ENCODE measurements at regions of chr13 and their contacts with region 1.

Region 1: DNA sequence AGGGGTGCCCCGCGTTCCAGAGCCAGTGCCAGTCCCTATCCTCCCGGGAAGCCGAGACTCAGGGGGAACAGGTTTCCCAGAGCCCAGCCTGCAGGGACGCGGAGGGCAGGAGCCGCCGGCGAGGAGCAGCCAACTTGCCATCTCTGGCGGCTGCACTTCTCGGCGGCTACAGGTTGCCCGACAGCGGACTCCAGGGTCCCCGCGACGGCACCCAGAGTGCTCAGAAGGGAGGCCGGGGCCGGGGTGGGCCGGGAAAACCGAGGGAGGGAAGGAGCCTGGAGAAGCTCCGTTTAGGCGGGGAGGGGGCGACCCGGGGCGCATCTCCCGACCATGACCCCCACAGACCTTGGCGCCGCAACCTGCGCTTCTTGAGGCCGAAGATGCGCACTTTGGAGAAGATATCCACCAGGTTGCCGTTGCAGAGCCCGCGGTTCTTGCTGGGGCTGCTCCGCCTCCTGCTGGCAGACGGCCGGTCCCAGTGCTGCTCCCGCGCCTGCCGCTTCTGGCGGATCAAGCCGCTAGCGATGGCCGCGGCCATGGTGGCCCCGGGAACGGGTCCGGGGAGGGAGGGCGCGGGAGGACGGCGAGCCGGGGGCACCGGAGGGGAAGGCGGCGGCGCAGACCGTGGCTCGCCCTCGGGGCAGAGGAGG is 463.8 kb downstream of the ITGBL1 start:
- DNase-seq: peak; percentile 61
- H3K4me3 ChIP-seq: peak overlapping the region; percentile 49
- H3K27ac ChIP-seq: no peak overlapping the region
- H3K4me1 ChIP-seq: peaks cover 13% of the 10 kb centered on the region
- H3K27me3 ChIP-seq: peaks cover 55% of the 10 kb centered on the region
- CTCF ChIP-seq: peak; percentile 60

Region 2: GRCh38 chr13:101785858-101786257 is 130.4 kb before region 1 on chr13:
- CTCF ChIA-PET with region 1: interaction called, 4 read pairs
- POLR2A ChIA-PET with region 1: no interaction called
- intact Hi-C with region 1: loop called (anchors 5 kb)
- DNase-seq: peak; percentile 58
- H3K4me3 ChIP-seq: no peak overlapping the region
- H3K27ac ChIP-seq: no peak overlapping the region
- H3K4me1 ChIP-seq: no peaks in the 10 kb centered on the region
- H3K27me3 ChIP-seq: no peaks in the 10 kb centered on the region
- CTCF ChIP-seq: peak; percentile 51

Measured in A673 (cell line).